A673 (cell line): ENCODE measurements at regions of chr20 and their contacts with region 1.

Region 1: DNA sequence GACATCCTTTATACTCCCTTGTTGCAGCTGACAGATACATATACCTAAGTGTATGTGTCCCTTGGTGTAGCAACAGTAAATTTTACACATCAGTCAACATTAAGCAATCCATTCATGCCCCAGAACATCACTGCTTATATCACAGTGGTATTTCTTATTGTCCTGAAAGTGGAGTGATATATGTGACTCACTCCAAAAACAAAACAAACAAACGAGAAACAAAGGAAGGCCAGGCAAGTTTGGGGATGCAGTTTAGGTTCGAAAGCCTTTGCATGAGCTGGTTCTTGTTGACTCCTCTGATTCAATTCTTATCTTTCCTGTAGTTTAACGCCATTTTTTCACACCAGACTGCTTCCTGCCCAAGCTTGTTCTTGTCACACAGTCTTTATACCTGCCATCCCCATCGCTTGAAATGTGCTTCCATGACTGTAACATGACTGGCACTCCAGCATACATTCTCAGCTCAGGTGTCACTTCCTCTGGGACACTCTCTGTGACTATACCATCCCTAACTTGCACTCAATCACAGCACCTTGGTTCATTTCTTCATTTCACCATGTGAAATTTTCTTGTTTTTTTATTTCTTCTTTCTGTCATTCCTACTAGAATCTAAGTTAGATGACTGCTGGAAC is 125.0 kb upstream of the TSHZ2 start:
- DNase-seq: no peak
- H3K4me3 ChIP-seq: no peak overlapping the region
- H3K27ac ChIP-seq: no peak overlapping the region
- H3K4me1 ChIP-seq: no peaks in the 10 kb centered on the region
- H3K27me3 ChIP-seq: no peaks in the 10 kb centered on the region
- CTCF ChIP-seq: no peak

Region 2: GRCh38 chr20:52150440-52151258 is 696.5 kb before region 1 on chr20:
- CTCF ChIA-PET with region 1: no interaction called
- POLR2A ChIA-PET with region 1: no interaction called
- intact Hi-C with region 1: loop called (anchors 5 kb)
- DNase-seq: peak; percentile 69
- H3K4me3 ChIP-seq: no peak overlapping the region
- H3K27ac ChIP-seq: no peak overlapping the region
- H3K4me1 ChIP-seq: no peaks in the 10 kb centered on the region
- H3K27me3 ChIP-seq: no peaks in the 10 kb centered on the region
- CTCF ChIP-seq: peak; percentile 87

Region 3: DNA sequence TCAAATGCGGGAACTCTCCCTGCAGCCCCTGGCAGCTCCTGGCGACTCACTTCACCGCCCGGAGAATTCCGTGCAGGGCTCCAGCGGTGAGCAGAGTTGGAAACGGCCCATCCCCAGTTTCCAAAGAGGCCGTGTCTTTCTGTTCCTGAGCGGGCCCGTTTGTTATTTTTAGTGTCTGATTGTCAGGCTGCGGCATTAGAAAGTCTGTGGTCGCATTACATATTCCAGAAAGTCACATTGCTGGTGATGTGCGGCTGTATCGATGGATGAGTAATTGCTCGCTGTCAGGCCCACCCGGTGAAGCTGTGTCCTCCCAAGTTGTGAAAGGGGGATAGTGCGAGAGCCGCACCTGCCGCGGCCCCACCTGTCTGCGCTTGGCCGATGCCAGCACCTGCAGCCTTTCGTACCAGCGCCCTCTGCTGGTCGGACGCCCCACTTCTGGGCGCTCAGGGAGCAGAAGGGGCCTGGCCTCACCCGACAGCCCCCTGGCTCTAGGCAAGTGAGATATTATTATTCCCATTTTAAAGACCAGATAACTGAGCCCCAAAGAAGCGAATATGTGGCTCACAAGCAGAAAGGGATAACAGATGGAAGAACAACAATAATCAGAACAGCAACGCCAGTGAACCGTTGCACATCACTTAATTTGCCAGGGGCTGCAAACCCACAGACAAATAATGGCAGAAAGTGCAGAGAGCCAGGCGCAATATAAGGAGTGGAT is 369.9 kb after region 1 on chr20:
- CTCF ChIA-PET with region 1: no interaction called
- POLR2A ChIA-PET with region 1: no interaction called
- intact Hi-C with region 1: no loop called
- DNase-seq: peak; percentile 52
- H3K4me3 ChIP-seq: no peak overlapping the region
- H3K27ac ChIP-seq: no peak overlapping the region
- H3K4me1 ChIP-seq: peaks cover 3% of the 10 kb centered on the region
- H3K27me3 ChIP-seq: no peaks in the 10 kb centered on the region
- CTCF ChIP-seq: peak; percentile 98